K562 (cell line): ENCODE measurements at regions of chr11 and their contacts with region 1.

Region 1: GRCh38 chr11:114180301-114181055 is 115.7 kb upstream of the NNMT start:
- DNase-seq: no peak
- ATAC-seq: peak; percentile 71
- H3K4me3 ChIP-seq: no peak overlapping the region
- H3K27ac ChIP-seq: no peak overlapping the region
- H3K4me1 ChIP-seq: peaks cover 7 to 11% of the 10 kb centered on the region in 2 experiments
- H3K27me3 ChIP-seq: peaks cover 16 to 49% of the 10 kb centered on the region in 2 experiments; a peak in 4 of 5 replicates
- CTCF ChIP-seq: peak; percentile 46 to 67 (median 59)
- EP300 ChIP-seq: no peak
- POLR2A ChIP-seq: no peak
- RAD21 ChIP-seq: peak; percentile 35 to 64

Region 2: DNA sequence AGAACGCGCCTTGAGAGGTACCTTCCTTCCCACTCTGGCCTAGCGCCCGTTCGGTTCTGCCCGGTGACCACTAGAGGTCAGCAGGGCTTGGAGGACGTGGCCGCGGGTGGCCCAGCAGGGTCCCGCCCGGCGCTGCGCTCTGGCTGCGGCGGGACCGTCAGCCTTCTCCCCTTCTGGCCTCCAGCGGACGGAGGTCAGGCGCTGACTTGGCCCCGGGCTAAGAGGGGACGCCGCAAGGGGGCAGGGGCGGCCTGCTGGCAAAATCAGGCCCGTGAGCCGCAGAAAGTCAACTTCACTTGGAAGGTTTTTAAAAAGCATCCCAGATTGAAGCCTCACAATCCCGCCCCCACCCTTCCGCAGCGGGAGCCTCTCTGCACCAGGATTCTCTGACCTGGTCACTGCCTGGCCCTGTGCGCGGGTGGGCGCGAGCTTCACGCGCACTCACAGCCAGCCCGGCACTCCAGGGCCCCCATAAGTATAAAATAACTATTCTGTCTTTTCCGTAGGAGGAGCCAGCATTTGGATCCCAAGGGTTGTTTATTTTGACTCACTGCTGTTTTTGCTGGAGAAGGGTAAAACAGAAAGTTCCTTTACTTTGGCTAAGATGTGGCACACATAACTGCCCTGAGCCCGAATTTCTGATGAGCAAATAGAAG is 144.2 kb before region 1 on chr11:
- CTCF ChIA-PET with region 1: no interaction called
- POLR2A ChIA-PET with region 1: no interaction called
- in situ Hi-C with region 1: no loop called
- intact Hi-C with region 1: loop called (anchors 5 kb)
- DNase-seq: peak; percentile 71 to 80 (median 76)
- ATAC-seq: peak; percentile 100
- H3K4me3 ChIP-seq: no peak overlapping the region
- H3K27ac ChIP-seq: no peak overlapping the region
- H3K4me1 ChIP-seq: peaks cover 0 to 6% of the 10 kb centered on the region in 2 experiments; a peak in 1 of 5 replicates
- H3K27me3 ChIP-seq: peaks cover 12 to 47% of the 10 kb centered on the region in 2 experiments
- CTCF ChIP-seq: peak; percentile 83 to 97 (median 88)
- EP300 ChIP-seq: no peak
- POLR2A ChIP-seq: no peak
- RAD21 ChIP-seq: peak; percentile 88 to 90

Region 3: DNA sequence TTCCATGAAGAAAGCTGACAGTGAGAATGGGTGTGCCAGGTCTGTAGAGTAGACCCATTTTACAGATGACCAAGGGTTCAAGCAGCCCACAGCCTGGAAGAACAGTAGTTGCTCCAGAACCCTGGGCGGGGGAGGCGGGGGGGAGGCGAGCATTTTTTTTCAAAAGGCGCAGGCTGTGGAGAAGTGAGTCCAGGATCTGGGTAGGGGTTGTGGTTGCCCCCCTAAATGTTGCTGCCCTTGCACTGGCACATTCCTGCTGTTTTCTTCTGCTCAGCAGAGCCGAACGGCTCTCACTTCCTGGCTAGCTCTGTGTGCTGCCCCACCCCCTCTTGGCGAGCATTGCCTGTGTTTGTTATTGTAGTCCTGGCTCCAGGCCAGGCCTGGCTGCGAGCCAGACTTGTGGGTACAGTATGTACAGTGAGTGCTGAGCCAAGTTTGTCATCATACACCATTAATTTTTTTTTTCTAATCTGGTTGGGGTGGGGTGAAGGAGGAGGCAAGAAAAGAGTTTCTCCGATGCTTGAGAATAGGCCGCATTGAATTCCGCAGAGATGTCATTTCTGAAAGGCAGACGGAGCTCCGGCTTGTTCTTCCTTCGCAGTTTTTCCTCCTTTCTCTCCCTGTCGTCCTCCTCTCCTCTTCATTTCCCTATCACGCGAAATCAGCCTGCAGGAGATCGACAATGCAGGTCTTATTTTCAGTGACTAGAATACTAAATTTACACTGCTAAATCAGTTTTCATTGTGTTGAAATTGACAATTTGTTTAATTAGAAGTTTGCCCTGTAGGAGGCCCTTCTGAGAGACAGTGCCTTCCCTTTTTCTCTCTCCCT is 20.5 kb before region 1 on chr11:
- CTCF ChIA-PET with region 1: no interaction called
- POLR2A ChIA-PET with region 1: no interaction called
- in situ Hi-C with region 1: no loop called
- intact Hi-C with region 1: loop called (anchors 2 kb)
- DNase-seq: peak; percentile 91 to 98 (median 92)
- ATAC-seq: peak; percentile 96
- H3K4me3 ChIP-seq: no peak overlapping the region; the same call in 1 of the 2 replicates
- H3K27ac ChIP-seq: peak overlapping the region; percentile 43; the same call in 2 of the 3 replicates
- H3K4me1 ChIP-seq: peaks cover 13 to 33% of the 10 kb centered on the region in 2 experiments
- H3K27me3 ChIP-seq: peaks cover 0 to 5% of the 10 kb centered on the region in 2 experiments; a peak in 2 of 5 replicates
- CTCF ChIP-seq: no peak
- EP300 ChIP-seq: peak; percentile 81
- POLR2A ChIP-seq: no peak
- RAD21 ChIP-seq: peak; percentile 46 to 50

Region 4: GRCh38 chr11:114192841-114193389 is 12.4 kb after region 1 on chr11:
- CTCF ChIA-PET with region 1: no interaction called
- POLR2A ChIA-PET with region 1: interaction called, 14 read pairs
- in situ Hi-C with region 1: no loop called
- intact Hi-C with region 1: no loop called
- DNase-seq: peak in 1 of 4 experiments; percentile 23
- ATAC-seq: peak; percentile 65
- H3K4me3 ChIP-seq: no peak overlapping the region
- H3K27ac ChIP-seq: no peak overlapping the region
- H3K4me1 ChIP-seq: no peaks in the 10 kb centered on the region; a peak in 2 of 5 replicates
- H3K27me3 ChIP-seq: no peaks in the 10 kb centered on the region
- CTCF ChIP-seq: peak; percentile 25 to 28 (median 28); a peak in 1 of 6 replicates
- EP300 ChIP-seq: no peak
- POLR2A ChIP-seq: no peak
- RAD21 ChIP-seq: peak; percentile 19 to 52; a peak in 2 of 4 replicates